Ascending aorta (tissue), 2 donors: ENCODE measurements at regions of chr15 and their contacts with region 1.

Region 1: GRCh38 chr15:90716976-90717821 is at the start of gene BLM:
- DNase-seq: peak; percentile 92 to 98
- H3K4me3 ChIP-seq: peak within 1 kb of the TSS; percentile 69
- H3K27ac ChIP-seq: peak within 1 kb of the TSS; percentile 89 to 91
- H3K4me1 ChIP-seq: peaks cover 6 to 7% of the 10 kb centered on the region in 2 donors
- H3K27me3 ChIP-seq: no peaks in the 10 kb centered on the region
- CTCF ChIP-seq: peak in 2 of 3 experiments; percentile 38 to 70
- total RNA-seq, gene BLM: 0.11 TPM

Region 2: DNA sequence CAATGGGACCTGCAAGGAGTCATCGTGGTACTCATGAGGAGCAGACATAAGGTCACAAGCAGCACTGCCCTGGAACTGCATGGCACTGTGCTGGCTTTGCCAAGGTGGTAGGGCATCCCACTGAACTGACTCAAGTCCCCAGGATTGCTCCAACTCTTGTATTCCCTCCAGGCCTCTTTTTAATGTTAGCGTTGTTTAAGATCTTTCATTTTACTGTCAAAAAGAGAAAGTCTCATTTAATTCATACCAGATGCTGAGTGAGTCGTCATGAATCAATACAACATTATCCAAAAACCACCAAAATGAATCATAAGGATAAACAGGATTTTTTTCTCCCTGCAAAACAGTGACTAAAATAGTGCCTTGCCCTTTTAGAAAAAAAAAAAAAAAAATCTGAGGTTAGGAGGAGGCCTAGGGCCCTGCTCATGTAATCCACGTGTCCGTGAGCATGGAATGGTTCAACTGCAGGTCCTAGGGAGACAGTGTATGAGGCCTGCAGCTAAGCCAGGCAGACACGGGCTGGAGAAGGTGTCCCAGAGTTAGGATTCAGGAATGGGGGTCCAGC is 36.7 kb before region 1 on chr15:
- intact Hi-C with region 1: loop called (anchors 2 kb)
- DNase-seq: peak in 1 of 2 donors; percentile 86
- H3K4me3 ChIP-seq: no peak overlapping the region
- H3K27ac ChIP-seq: peak overlapping the region; percentile 87 to 92
- H3K4me1 ChIP-seq: peaks cover 4 to 17% of the 10 kb centered on the region in 2 donors
- H3K27me3 ChIP-seq: no peaks in the 10 kb centered on the region
- CTCF ChIP-seq: no peak

Region 3: DNA sequence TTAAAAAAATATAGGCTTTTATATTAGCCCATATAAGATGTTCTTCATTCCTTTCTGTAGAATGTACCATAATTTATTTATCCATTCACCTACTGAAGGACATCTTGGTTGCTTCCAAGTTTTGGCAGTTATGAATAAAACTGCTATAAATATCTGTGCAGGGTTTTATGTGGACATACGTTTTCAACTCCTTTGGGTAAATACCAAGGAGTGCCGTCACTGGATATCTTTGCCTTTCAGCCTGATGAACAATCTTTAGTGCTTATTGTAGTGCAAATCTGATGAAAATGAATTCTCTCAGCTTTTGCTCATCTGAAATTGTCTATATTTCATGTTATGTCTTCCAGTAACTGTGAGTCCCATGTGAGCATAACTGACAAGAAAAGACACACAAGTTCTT is 26.6 kb before region 1 on chr15:
- intact Hi-C with region 1: no loop called
- DNase-seq: no peak
- H3K4me3 ChIP-seq: no peak overlapping the region
- H3K27ac ChIP-seq: no peak overlapping the region
- H3K4me1 ChIP-seq: no peaks in the 10 kb centered on the region
- H3K27me3 ChIP-seq: no peaks in the 10 kb centered on the region
- CTCF ChIP-seq: no peak

Region 4: DNA sequence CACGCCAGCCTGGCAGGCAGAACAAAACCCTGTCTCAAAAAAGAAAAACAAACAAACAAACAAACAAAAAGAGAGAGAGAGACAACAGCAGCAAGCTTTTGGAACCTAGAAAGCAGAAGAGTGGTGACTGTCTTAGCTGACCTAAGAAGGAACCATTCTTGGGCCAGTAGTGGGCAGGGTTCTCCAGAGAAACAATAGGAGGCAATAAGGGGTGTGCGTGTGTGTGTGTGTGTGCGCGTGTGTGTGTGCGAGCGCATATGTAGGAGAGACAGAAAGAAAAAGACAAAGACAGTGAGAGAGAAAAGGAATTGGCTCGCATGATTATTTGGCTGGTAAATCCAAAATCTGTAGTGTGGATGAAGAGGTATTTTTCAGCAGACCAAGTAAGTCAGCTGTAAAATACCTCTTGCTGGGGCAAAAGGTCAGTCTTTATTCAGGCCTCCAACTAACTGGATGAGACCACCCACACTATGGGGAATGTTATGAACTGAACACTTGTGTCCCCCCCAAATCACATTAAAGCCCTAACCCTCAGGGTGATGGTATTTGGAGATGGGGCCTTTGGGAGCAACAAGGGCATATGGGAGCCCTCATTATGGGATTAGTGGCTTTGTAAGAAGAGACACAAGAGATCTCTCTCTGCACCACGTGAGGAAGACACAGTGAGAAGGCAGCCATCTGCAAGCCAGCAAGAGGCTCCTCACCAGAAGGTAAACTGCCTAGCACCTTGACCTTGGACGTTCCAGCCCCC is 15.1 kb before region 1 on chr15:
- intact Hi-C with region 1: no loop called
- DNase-seq: no peak
- H3K4me3 ChIP-seq: no peak overlapping the region
- H3K27ac ChIP-seq: no peak overlapping the region
- H3K4me1 ChIP-seq: no peaks in the 10 kb centered on the region
- H3K27me3 ChIP-seq: no peaks in the 10 kb centered on the region
- CTCF ChIP-seq: no peak

Region 5: DNA sequence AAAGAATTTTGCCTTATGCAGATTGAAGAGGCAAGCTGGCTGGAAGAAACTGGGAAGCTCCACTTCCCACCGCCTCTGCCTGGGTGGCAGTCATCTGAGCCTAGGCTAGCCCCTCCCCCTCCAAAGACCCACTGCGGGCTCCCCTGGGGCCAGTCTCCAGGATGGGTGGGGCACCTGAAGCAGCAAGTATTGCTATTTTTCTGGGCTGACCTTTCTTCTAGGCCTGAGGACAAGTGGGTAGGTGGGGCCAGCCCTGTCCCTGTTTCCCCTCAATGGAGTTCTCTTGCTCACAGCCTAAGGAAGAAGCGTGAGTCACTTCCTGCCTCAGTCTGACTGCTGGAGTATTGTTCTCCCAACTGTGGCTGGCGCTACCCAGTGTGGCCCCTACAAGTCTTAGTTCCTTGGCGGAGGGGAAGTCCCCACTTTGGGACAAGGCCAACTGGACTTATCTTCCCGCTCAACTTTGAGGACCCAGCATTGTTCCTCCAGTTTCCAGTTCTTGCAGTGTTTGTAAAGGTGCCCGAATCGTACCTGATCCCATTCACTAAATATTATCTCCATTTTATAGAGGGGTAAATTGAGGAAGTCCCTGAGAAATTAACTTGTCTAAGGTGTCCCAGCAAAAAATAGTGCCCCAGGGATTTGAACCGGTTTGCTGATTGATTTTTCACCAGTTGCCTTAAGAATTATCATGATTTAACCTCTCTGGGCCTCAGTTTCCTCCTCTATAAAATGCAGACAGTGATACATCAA is 152.6 kb after region 1 on chr15:
- intact Hi-C with region 1: loop called (anchors 2 kb)
- DNase-seq: peak; percentile 78 to 92
- H3K4me3 ChIP-seq: no peak overlapping the region
- H3K27ac ChIP-seq: peak overlapping the region; percentile 91 to 95
- H3K4me1 ChIP-seq: peaks cover 10 to 36% of the 10 kb centered on the region in 2 donors
- H3K27me3 ChIP-seq: no peaks in the 10 kb centered on the region
- CTCF ChIP-seq: no peak

Region 6: DNA sequence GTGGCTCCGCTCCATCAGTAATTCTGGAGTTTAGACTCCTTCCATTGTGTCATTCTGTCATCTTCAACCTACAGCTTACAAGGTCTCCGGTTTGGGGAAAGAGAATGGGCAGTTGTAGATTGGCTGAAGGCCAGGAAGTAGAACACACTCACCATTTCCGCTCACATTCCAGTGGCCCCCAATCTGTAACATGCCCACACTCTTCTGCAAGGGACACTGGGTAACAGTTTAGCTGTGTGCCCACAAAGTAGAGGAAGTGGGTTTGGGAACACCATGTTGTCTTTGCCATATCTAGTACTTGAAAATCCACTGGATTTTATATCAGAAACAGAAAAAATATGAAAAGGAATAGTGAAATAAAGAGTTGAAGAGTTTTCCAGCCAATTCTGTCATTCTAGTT is 536.4 kb after region 1 on chr15:
- intact Hi-C with region 1: no loop called
- DNase-seq: no peak
- H3K4me3 ChIP-seq: no peak overlapping the region
- H3K27ac ChIP-seq: no peak overlapping the region
- H3K4me1 ChIP-seq: no peaks in the 10 kb centered on the region
- H3K27me3 ChIP-seq: no peaks in the 10 kb centered on the region
- CTCF ChIP-seq: no peak